ENCODE measurements at regions of chr20 and their contacts with region 1.

Region 1: DNA sequence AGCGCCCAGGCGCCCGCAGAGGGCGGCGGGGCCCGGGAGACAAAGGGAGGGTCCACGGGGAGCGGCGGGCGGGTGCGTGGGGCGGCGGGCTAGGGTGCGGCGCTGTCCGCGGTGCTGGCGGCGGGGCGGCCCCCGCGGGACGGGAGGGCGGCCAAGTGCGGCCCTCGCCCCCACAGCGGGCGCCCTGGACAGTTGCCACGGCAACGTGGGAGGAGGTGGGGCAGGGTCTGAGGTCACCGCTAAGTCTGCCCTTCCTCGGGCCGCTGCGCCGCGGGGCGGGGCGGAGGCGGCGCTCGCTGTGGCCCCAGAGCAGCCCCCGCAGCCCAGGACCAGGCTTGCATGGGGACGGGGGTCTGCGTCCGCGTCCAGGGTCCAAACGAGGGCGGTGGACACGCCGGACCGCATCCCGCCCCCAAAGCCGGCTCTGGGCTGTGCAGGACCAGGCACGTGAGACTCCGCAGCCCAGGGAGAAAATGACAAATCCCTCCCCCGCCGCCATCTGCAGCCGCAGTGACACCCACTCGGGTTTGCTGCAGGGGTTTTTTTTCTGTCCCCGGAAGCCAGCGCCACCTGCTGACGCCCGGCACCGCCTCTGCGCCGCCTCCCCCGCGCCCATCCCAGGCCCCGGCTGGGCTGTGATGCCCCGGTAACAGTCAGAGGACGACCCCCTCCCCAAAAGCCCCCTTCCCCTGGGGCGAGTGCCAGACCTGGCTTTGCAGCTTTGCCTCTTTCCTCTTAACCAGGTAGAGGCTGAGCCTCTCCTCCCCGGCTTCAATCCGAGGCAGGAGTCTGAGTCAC is 36.8 kb downstream of the YTHDF1 start:
- DNase-seq: peak; percentile 55 to 96 (median 80)

Region 2: GRCh38 chr20:63056236-63056948 is 122.7 kb before region 1 on chr20:
- intact Hi-C with region 1: loop called (anchors 1 kb)
- DNase-seq: peak; percentile 26 to 90 (median 48)

Measured in posterior cingulate gyrus (tissue), 11 donors.